ENCODE measurements at regions of chr6 and their contacts with region 1.

Region 1: DNA sequence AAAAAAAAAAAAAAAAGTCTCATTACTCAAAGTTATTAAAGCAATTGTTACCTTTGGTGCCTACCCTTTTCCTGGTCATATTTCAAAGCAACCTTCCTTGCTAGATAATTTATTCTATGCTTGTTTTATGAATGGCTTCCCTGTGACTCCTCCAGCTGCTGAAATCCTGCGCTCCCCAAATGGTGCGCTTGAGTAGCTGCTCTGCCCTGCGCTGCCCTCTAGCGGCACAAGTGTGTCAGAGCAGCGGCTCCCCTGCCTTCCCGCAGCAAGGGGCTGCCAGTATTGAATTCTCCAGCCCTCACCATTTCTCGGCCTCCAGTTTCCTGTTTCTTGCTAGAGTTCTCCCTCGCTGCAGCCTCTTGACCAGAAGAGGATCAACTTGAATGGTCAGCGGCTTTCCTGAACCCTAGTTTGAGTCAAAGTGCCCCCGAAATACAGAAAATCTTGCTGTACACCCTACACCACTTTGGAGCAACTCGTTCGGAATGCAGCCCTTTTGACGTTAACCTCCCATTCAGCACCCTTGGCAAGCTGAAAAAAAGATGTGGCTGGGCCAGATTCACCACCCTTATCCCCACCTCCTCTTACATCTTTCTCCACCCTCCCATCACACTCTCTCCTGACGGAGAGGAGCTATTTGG is 60.4 kb upstream of the KLHL31 start:
- DNase-seq: peak; percentile 76
- CTCF ChIP-seq: peak; percentile 100

Region 2: GRCh38 chr6:53492860-53493634 is 232.9 kb before region 1 on chr6:
- in situ Hi-C with region 1: loop called (anchors 10 kb)
- DNase-seq: peak; percentile 28
- CTCF ChIP-seq: peak; percentile 67